ENCODE measurements at regions of chr15 and their contacts with region 1.

Region 1: DNA sequence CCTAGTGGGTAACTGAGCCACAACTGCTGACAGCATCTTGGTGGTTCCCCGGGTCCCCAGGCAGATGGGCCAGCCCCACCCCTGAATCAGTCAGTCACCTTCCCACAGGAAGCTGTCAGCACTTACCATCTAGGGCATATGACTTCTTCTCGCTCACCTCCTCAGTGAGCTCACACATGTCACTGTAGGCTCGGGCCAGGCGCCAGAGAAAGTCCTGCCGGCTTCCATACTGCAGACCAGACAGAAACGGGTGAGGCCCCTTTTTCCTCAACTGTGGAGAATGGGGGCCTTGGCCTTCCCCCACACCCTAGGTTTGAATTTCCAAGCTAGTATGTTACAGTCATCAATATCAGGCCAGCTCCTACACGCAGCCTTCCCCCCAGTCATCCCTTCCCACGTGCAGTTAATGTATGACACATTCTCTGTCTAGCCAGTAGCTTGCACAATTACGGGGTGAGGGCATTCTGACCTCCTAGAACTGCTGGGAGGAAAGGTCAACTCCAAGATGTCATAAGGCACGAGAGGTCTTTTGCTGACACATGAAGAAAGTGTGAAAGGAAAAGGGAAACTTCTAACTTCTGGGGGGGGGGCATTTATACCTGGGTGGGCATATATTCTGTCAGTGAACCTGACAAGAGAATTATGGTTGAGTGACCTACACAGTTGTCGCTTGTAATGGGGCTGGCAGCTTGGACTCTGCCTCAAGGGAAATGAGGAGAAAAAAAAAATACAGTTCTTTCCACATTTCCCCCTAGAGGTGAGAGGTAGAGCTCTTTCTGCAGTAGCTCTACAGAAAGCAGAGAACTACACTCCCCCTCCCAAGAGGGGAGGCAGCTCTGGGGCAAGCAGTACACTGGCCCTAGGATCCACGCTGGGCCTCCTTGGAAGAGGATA is 10.9 kb downstream of the RMDN3 start:
- DNase-seq: no peak
- CTCF ChIP-seq: no peak

Region 2: DNA sequence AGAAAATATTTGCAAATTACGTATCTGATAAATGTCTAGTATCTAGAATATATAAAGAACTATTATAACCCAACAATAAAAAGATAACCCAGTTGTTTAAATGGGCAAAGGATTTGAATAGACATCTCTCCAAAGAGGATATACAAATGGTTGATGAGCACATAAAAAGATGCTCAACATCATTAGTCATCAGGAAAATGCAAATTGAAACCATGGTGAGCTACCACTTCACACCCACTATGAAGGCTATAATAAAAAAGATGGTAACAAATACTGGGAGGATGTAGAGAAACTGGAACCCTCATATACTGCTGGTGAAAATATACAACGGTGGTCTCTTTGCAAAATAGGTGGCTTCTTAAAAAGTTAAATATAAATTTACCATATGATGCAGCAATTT is 21.2 kb before region 1 on chr15:
- CTCF ChIA-PET with region 1: interaction called, 10 read pairs
- POLR2A ChIA-PET with region 1: no interaction called
- DNase-seq: no peak
- CTCF ChIP-seq: no peak

Region 3: GRCh38 chr15:40731034-40731433 is 13.1 kb before region 1 on chr15:
- CTCF ChIA-PET with region 1: interaction called, 32 read pairs
- POLR2A ChIA-PET with region 1: no interaction called
- DNase-seq: no peak
- CTCF ChIP-seq: no peak

Measured in GM10248 (cell line).